T-cell (primary cell): ENCODE measurements at regions of chr1 and their contacts with region 1.

Region 1: GRCh38 chr1:229227298-229227919 is 43.5 kb upstream of the RAB4A start:
- DNase-seq: peak; percentile 54 to 88 (median 78)
- ATAC-seq: peak; percentile 83 to 91 (median 86)
- H3K4me3 ChIP-seq: no peak overlapping the region
- H3K4me3 Mint-ChIP-seq: peak overlapping the region in 1 of 3 donors; percentile 3
- H3K27ac ChIP-seq: no peak overlapping the region
- H3K27ac Mint-ChIP-seq: no peak overlapping the region
- H3K4me1 ChIP-seq: peaks cover 11 to 22% of the 10 kb centered on the region in 2 experiments
- H3K4me1 Mint-ChIP-seq: peaks cover 18 to 27% (median 20%) of the 10 kb centered on the region in 3 donors
- H3K27me3 ChIP-seq: peaks cover 0 to 7% of the 10 kb centered on the region in 2 experiments
- H3K27me3 Mint-ChIP-seq: peaks cover 0 to 11% of the 10 kb centered on the region in 2 donors

Region 2: GRCh38 chr1:228664399-228664914 is 563.0 kb before region 1 on chr1:
- CTCF ChIA-PET with region 1: interaction called, 7 to 13 read pairs
- POLR2A ChIA-PET with region 1: no interaction called
- DNase-seq: peak; percentile 44 to 88 (median 73)
- ATAC-seq: peak in 2 of 4 experiments; percentile 35 to 45
- H3K4me3 ChIP-seq: no peak overlapping the region
- H3K4me3 Mint-ChIP-seq: no peak overlapping the region
- H3K27ac ChIP-seq: no peak overlapping the region
- H3K27ac Mint-ChIP-seq: no peak overlapping the region
- H3K4me1 ChIP-seq: peaks cover 0 to 3% of the 10 kb centered on the region in 2 experiments
- H3K4me1 Mint-ChIP-seq: no peaks in the 10 kb centered on the region
- H3K27me3 ChIP-seq: peaks cover 0 to 6% of the 10 kb centered on the region in 2 experiments
- H3K27me3 Mint-ChIP-seq: peaks cover 3 to 19% of the 10 kb centered on the region in 2 donors

Region 3: GRCh38 chr1:228691926-228692325 is 535.5 kb before region 1 on chr1:
- CTCF ChIA-PET with region 1: interaction called, 4 to 29 read pairs
- POLR2A ChIA-PET with region 1: no interaction called
- DNase-seq: peak in 11 of 35 experiments; percentile 2 to 69 (median 17)
- ATAC-seq: peak in 2 of 4 experiments; percentile 23 to 47
- H3K4me3 ChIP-seq: no peak overlapping the region
- H3K4me3 Mint-ChIP-seq: no peak overlapping the region
- H3K27ac ChIP-seq: no peak overlapping the region
- H3K27ac Mint-ChIP-seq: no peak overlapping the region
- H3K4me1 ChIP-seq: peaks cover 2 to 6% of the 10 kb centered on the region in 2 experiments
- H3K4me1 Mint-ChIP-seq: peaks cover 9 to 10% (median 9%) of the 10 kb centered on the region in 3 donors
- H3K27me3 ChIP-seq: peaks cover 0 to 2% of the 10 kb centered on the region in 2 experiments
- H3K27me3 Mint-ChIP-seq: peaks cover 12 to 13% of the 10 kb centered on the region in 2 donors

Region 4: DNA sequence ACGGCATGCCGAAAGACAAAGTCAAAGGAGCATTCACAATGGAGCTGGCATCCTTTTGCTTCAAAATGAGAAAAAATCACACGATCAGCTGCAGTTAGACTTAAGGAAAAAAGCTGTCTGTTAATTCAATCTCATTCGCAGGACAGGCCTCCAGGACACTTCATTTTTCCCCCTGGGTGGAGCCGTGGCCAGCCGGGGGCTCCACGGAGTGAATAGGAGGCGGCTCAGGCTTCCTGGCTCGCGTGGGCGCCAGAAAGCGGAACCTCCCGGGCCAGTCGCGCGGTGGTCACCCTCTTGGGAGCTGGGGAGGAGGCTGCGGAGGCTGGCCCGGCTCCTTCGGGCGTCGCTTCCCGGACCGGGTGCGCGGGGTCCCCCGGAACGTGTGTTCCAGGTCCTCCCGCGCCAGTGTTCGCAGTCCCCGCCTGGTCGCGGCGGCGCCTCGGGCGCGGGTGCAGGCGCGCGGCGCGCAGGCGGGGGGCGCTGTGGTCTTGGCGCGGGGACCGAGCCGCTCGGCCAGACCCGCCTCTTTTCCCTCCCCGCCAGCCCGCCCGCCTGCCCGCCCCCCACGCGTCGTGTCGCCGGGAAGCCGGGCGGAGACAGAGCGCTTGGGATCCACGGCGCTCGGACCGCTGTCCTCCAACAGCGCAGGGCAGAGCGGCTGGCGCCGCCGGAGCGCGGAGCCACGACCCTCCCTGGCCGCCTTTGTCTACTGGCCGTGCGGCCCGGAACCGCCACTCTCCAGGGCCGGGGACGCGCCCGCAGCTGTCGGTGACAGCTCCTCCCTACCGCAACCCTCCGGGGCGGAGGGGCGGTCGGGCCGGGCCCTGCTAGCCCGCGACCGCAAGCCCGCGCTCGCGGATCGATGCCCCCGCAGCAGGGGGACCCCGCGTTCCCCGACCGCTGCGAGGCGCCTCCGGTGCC is 492.3 kb before region 1 on chr1 and contains the start of gene RHOU:
- CTCF ChIA-PET with region 1: interaction called, 5 to 28 read pairs
- POLR2A ChIA-PET with region 1: no interaction called
- DNase-seq: peak; percentile 28 to 84 (median 57)
- ATAC-seq: peak; percentile 88 to 91 (median 90)
- H3K4me3 ChIP-seq: peak within 1 kb of the TSS; percentile 50 to 73
- H3K4me3 Mint-ChIP-seq: peak within 1 kb of the TSS; percentile 85 to 90 (median 86)
- H3K27ac ChIP-seq: peak within 1 kb of the TSS; percentile 36
- H3K27ac Mint-ChIP-seq: peak within 1 kb of the TSS; percentile 69 to 81
- H3K4me1 ChIP-seq: peaks cover 0 to 39% of the 10 kb centered on the region in 2 experiments
- H3K4me1 Mint-ChIP-seq: peaks cover 26 to 27% (median 26%) of the 10 kb centered on the region in 3 donors
- H3K27me3 ChIP-seq: peaks cover 0 to 2% of the 10 kb centered on the region in 2 experiments
- H3K27me3 Mint-ChIP-seq: peaks cover 10 to 11% of the 10 kb centered on the region in 2 donors
- total RNA-seq, gene RHOU: 1.5 to 2.3 (median 1.8) TPM

Region 5: DNA sequence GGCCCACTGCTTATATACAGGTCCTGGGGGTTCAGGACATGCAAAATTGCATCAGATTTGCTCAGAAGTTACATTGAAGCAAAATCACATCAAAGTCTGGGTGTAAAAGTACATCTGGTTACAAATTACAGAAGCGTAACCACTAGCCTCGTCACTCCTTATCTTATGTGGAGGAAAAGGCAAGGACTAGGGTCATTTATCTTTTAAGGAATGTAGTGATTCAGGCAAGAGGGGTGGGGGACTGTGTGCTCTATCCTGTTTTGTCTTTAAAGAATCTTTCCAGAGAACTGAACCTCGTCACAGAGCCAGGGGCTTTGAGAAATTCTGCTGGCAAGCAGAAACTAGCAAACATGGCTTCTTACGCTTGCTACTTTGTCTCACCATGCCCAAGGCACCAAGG is 17.6 kb before region 1 on chr1:
- CTCF ChIA-PET with region 1: no interaction called
- POLR2A ChIA-PET with region 1: no interaction called
- DNase-seq: no peak
- ATAC-seq: no peak
- H3K4me3 ChIP-seq: no peak overlapping the region
- H3K4me3 Mint-ChIP-seq: no peak overlapping the region
- H3K27ac ChIP-seq: no peak overlapping the region
- H3K27ac Mint-ChIP-seq: no peak overlapping the region
- H3K4me1 ChIP-seq: peaks cover 14 to 20% of the 10 kb centered on the region in 2 experiments
- H3K4me1 Mint-ChIP-seq: peaks cover 6 to 12% (median 9%) of the 10 kb centered on the region in 3 donors
- H3K27me3 ChIP-seq: no peaks in the 10 kb centered on the region
- H3K27me3 Mint-ChIP-seq: no peaks in the 10 kb centered on the region